GM12878 (cell line): ENCODE measurements at regions of chr6 and their contacts with region 1.

Region 1: DNA sequence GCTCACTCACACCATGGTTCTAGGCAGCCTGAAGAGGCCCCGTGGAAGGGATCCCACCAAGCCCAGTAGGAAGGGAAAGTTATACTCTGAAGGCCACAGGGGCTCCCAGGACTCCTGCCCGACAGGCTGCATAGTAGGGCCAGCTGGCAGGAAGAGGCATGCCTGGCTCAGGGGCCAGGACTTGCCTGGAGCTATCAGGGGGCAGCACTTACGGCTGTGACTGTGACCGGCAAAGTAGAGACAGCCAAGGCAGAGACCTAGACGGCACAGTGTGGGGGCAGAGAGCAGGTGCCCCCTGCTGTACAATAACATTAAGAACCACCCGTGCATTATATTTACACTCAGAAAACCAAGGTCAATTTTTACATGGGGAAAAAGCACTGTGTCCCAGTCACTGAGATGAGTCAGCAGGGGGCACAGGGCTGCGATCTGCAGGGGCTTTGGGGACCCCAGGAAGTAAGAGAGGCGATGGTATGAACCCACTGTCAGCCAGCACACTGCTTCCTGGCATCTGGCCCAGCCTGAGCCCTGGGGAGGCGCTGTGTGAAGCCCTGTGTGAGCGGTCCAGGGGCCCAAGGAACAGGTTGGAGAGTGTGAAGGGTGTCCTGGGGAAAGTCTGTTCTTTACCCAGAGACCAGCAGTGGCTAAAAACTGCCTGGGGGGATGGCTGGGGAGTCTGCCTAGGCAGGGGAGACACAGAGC is 9.9 kb downstream of the CCDC167 start:
- DNase-seq: no peak
- ATAC-seq: peak; percentile 54
- H3K4me3 ChIP-seq: no peak overlapping the region
- H3K27ac ChIP-seq: peak overlapping the region; percentile 69
- H3K4me1 ChIP-seq: peaks cover 58% of the 10 kb centered on the region
- H3K27me3 ChIP-seq: no peaks in the 10 kb centered on the region
- CTCF ChIP-seq: peak; percentile 11 to 35 (median 14); a peak in 4 of 6 replicates
- EP300 ChIP-seq: no peak
- POLR2A ChIP-seq: 0 out of 2 replicates have a peak, but pooled peaks have one; percentile 9
- RAD21 ChIP-seq: no peak

Region 2: DNA sequence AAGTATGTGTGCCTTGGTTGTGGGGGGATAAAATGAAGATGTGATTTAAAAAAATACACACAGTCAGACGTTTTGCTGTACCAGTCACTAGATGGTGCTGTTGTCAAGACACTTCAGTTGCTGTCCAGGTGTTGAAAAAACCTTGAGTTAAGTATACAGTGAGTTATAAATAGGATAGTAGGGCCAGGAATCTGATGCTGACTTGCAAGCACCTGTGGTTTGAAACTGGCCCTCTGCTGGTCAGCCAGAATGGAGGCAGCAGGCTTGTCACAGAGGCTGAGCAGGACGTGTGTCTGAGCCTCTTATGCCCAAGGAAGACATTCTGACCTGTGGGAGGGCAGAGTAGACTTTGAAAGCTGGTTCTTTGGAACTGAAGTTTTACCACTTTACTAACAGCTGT is 108.2 kb before region 1 on chr6:
- CTCF ChIA-PET with region 1: interaction called, 5 read pairs
- POLR2A ChIA-PET with region 1: interaction called, 4 read pairs
- RAD21 ChIA-PET with region 1: no interaction called
- SMC1A ChIA-PET with region 1: interaction called, 3 read pairs
- in situ Hi-C with region 1: no loop called
- intact Hi-C with region 1: loop called (anchors 5 kb)
- DNase-seq: peak; percentile 32
- ATAC-seq: peak; percentile 87
- H3K4me3 ChIP-seq: no peak overlapping the region
- H3K27ac ChIP-seq: no peak overlapping the region
- H3K4me1 ChIP-seq: peaks cover 3% of the 10 kb centered on the region; the same call in 1 of the 2 replicates
- H3K27me3 ChIP-seq: no peaks in the 10 kb centered on the region
- CTCF ChIP-seq: peak; percentile 72 to 85 (median 83)
- EP300 ChIP-seq: no peak
- POLR2A ChIP-seq: no peak
- RAD21 ChIP-seq: peak; percentile 76

Region 3: GRCh38 chr6:37432916-37433656 is 56.7 kb before region 1 on chr6 and contains the start of gene CMTR1:
- CTCF ChIA-PET with region 1: interaction called, 3 read pairs
- POLR2A ChIA-PET with region 1: interaction called, 11 read pairs
- RAD21 ChIA-PET with region 1: no interaction called
- SMC1A ChIA-PET with region 1: interaction called, 3 read pairs
- in situ Hi-C with region 1: no loop called
- intact Hi-C with region 1: no loop called
- DNase-seq: peak; percentile 83
- ATAC-seq: peak; percentile 91
- H3K4me3 ChIP-seq: peak within 1 kb of the TSS; percentile 97
- H3K27ac ChIP-seq: peak within 1 kb of the TSS; percentile 94
- H3K4me1 ChIP-seq: peaks cover 5% of the 10 kb centered on the region
- H3K27me3 ChIP-seq: no peaks in the 10 kb centered on the region
- CTCF ChIP-seq: no peak
- EP300 ChIP-seq: peak in 1 of 2 experiments; percentile 42; a peak in 2 of 4 replicates
- POLR2A ChIP-seq: peak; percentile 90
- RAD21 ChIP-seq: no peak
- polyA plus RNA-seq, gene CMTR1: 2.7 to 3.5 TPM

Region 4: GRCh38 chr6:37516076-37516919 is 26.5 kb after region 1 on chr6:
- CTCF ChIA-PET with region 1: interaction called, 22 read pairs
- POLR2A ChIA-PET with region 1: interaction called, 8 read pairs
- RAD21 ChIA-PET with region 1: interaction called, 18 read pairs
- SMC1A ChIA-PET with region 1: interaction called, 29 read pairs
- in situ Hi-C with region 1: no loop called
- intact Hi-C with region 1: no loop called
- DNase-seq: peak; percentile 78
- ATAC-seq: peak; percentile 94
- H3K4me3 ChIP-seq: 0 out of 2 replicates have a peak overlapping the region, but pooled peaks have one; percentile 10
- H3K27ac ChIP-seq: peak overlapping the region; percentile 65
- H3K4me1 ChIP-seq: peaks cover 33% of the 10 kb centered on the region
- H3K27me3 ChIP-seq: no peaks in the 10 kb centered on the region
- CTCF ChIP-seq: peak in 2 of 3 experiments; percentile 3 to 11; a peak in 1 of 6 replicates
- EP300 ChIP-seq: peak in 1 of 2 experiments; percentile 26; a peak in 1 of 4 replicates
- POLR2A ChIP-seq: peak; percentile 69
- RAD21 ChIP-seq: no peak

Region 5: DNA sequence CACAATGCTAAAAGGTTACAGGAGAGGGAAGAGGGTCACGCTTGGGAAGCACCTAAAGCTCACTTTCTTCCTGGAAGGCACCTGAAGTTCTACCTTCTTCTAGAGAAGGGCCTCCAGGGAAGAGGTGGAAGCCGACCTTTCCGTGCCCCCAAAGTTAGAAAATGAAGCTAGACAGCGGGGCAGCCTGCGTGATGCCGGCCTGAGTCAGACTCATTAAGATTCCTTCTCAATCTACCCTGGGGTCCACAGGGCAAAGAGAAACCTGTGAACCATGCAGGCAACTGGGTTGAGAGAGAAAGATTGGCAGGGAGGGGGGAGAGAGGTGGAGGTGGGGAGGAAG is 64.6 kb after region 1 on chr6:
- CTCF ChIA-PET with region 1: interaction called, 7 read pairs
- POLR2A ChIA-PET with region 1: interaction called, 45 read pairs
- RAD21 ChIA-PET with region 1: interaction called, 32 read pairs
- SMC1A ChIA-PET with region 1: interaction called, 23 read pairs
- in situ Hi-C with region 1: loop called (anchors 10 kb)
- intact Hi-C with region 1: no loop called
- DNase-seq: no peak
- ATAC-seq: peak; percentile 8
- H3K4me3 ChIP-seq: peak overlapping the region; percentile 81
- H3K27ac ChIP-seq: peak overlapping the region; percentile 91
- H3K4me1 ChIP-seq: peaks cover 86% of the 10 kb centered on the region
- H3K27me3 ChIP-seq: no peaks in the 10 kb centered on the region
- CTCF ChIP-seq: no peak
- EP300 ChIP-seq: no peak
- POLR2A ChIP-seq: no peak
- RAD21 ChIP-seq: no peak

Region 6: GRCh38 chr6:37559501-37559900 is 69.7 kb after region 1 on chr6:
- CTCF ChIA-PET with region 1: interaction called, 97 read pairs
- POLR2A ChIA-PET with region 1: interaction called, 53 read pairs
- RAD21 ChIA-PET with region 1: interaction called, 32 read pairs
- SMC1A ChIA-PET with region 1: interaction called, 92 read pairs
- in situ Hi-C with region 1: loop called (anchors 10 kb)
- intact Hi-C with region 1: no loop called
- DNase-seq: no peak
- ATAC-seq: no peak
- H3K4me3 ChIP-seq: peak overlapping the region; percentile 11; the same call in 1 of the 2 replicates
- H3K27ac ChIP-seq: peak overlapping the region; percentile 91
- H3K4me1 ChIP-seq: peaks cover 88% of the 10 kb centered on the region
- H3K27me3 ChIP-seq: no peaks in the 10 kb centered on the region
- CTCF ChIP-seq: no peak
- EP300 ChIP-seq: no peak
- POLR2A ChIP-seq: no peak
- RAD21 ChIP-seq: no peak